ENCODE measurements at regions of chr1 and their contacts with region 1.

Region 1: GRCh38 chr1:100626397-100626796 is 88.5 kb downstream of the GPR88 start:
- DNase-seq: no peak
- H3K4me3 Mint-ChIP-seq: no peak overlapping the region
- H3K27ac Mint-ChIP-seq: no peak overlapping the region
- H3K4me1 Mint-ChIP-seq: peaks cover 15% of the 10 kb centered on the region
- H3K27me3 Mint-ChIP-seq: peaks cover 4% of the 10 kb centered on the region

Region 2: GRCh38 chr1:100581096-100581705 is 45.2 kb before region 1 on chr1:
- CTCF ChIA-PET with region 1: no interaction called
- POLR2A ChIA-PET with region 1: no interaction called
- intact Hi-C with region 1: loop called (anchors 1 kb)
- DNase-seq: peak; percentile 47
- H3K4me3 Mint-ChIP-seq: no peak overlapping the region
- H3K27ac Mint-ChIP-seq: no peak overlapping the region
- H3K4me1 Mint-ChIP-seq: peaks cover 10% of the 10 kb centered on the region
- H3K27me3 Mint-ChIP-seq: peaks cover 2% of the 10 kb centered on the region

Region 3: GRCh38 chr1:100699744-100700143 is 73.3 kb after region 1 on chr1:
- CTCF ChIA-PET with region 1: no interaction called
- POLR2A ChIA-PET with region 1: no interaction called
- intact Hi-C with region 1: no loop called
- DNase-seq: no peak
- H3K4me3 Mint-ChIP-seq: no peak overlapping the region
- H3K27ac Mint-ChIP-seq: no peak overlapping the region
- H3K4me1 Mint-ChIP-seq: no peaks in the 10 kb centered on the region
- H3K27me3 Mint-ChIP-seq: peaks cover 16% of the 10 kb centered on the region

Region 4: GRCh38 chr1:100713626-100714025 is 87.2 kb after region 1 on chr1:
- CTCF ChIA-PET with region 1: no interaction called
- POLR2A ChIA-PET with region 1: no interaction called
- intact Hi-C with region 1: loop called (anchors 1 kb)
- DNase-seq: no peak
- H3K4me3 Mint-ChIP-seq: no peak overlapping the region
- H3K27ac Mint-ChIP-seq: no peak overlapping the region
- H3K4me1 Mint-ChIP-seq: peaks cover 5% of the 10 kb centered on the region
- H3K27me3 Mint-ChIP-seq: peaks cover 8% of the 10 kb centered on the region

Region 5: GRCh38 chr1:100767176-100767890 is 140.9 kb after region 1 on chr1:
- CTCF ChIA-PET with region 1: no interaction called
- POLR2A ChIA-PET with region 1: no interaction called
- intact Hi-C with region 1: no loop called
- DNase-seq: no peak
- H3K4me3 Mint-ChIP-seq: no peak overlapping the region
- H3K27ac Mint-ChIP-seq: no peak overlapping the region
- H3K4me1 Mint-ChIP-seq: no peaks in the 10 kb centered on the region
- H3K27me3 Mint-ChIP-seq: no peaks in the 10 kb centered on the region

Region 6: DNA sequence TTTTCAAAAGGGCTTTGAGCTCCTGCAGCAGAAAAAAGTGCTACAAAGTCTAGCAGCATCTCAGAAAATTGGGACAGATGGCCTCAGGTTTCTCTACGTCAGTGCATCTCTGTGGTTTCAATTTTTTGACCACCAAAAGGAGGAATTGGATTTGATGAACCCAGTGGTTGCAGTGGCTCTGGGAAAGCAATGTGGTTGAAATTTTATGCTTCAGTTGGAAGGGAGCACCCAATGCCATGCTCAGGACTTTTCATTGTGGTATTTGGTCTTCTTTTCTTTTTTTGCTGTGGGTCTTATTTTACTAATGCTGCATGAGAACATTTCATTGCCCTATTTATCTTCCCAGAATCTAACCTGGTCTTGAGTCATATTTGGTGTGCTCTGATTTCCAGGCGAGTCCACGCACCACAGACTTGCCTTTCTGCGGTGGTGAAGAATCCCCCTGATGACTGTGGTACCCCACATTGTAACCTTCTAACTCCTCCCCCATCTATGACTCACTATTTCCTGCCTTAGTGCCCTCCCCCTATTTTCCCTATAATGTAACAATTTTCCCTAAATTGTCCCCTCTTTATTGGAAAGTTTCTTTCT is 667.2 kb after region 1 on chr1:
- CTCF ChIA-PET with region 1: no interaction called
- POLR2A ChIA-PET with region 1: no interaction called
- intact Hi-C with region 1: loop called (anchors 1 kb)
- DNase-seq: peak; percentile 82
- H3K4me3 Mint-ChIP-seq: peak overlapping the region; percentile 33
- H3K27ac Mint-ChIP-seq: peak overlapping the region; percentile 78
- H3K4me1 Mint-ChIP-seq: peaks cover 80% of the 10 kb centered on the region
- H3K27me3 Mint-ChIP-seq: no peaks in the 10 kb centered on the region

Measured in activated CD4-positive, alpha-beta memory T cell treated with anti-CD3 and anti-CD28 coated beads for 36 hours (primary cell).